PC-3 (cell line): ENCODE measurements at regions of chr1 and their contacts with region 1.

Region 1: DNA sequence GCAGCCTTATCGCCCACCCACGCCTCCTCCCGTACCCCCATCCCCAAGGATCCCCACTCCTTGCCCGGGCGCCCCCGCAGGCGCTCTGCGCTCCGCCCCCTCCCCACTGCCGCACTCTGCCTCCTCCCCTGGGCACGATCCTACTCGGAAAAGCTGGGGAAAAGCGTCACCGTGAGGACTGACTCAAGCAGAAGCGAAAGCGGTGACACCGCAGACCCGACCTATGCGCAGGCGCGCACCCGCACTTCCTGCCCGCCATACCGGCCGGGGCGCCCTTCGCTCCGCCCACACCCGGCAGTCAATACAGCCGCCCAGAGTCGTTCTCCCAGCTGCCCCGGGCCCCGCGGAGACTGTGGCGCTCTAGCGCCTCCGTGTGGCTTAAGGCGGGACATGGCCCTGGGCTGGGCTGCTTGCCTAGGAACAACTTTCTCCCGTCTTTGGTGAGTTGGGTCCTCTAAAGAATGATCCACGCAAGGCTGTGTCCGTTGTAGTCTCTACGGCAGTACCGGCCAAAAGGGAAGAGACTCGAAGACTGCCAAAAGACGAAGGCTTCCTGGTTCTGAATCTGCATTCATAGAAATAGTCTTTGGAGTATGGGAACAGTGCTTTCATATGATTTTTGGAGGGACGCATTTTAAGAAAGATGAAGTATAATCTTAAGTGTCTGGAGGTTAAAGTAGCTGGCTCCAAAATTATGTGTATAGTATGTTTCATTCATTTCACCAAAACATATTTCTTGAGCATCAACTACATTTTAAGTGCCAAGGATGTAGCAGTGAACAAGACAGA is at the start of gene OMA1:
- DNase-seq: peak; percentile 96
- ATAC-seq: peak; percentile 92
- H3K4me3 ChIP-seq: peak within 1 kb of the TSS; percentile 82
- H3K27ac ChIP-seq: peak within 1 kb of the TSS; percentile 66
- H3K4me1 ChIP-seq: peaks cover 11% of the 10 kb centered on the region
- H3K27me3 ChIP-seq: no peaks in the 10 kb centered on the region
- CTCF ChIP-seq: peak; percentile 90
- total RNA-seq, gene OMA1: 9.2 and 16.1 TPM in 2 replicates

Region 2: DNA sequence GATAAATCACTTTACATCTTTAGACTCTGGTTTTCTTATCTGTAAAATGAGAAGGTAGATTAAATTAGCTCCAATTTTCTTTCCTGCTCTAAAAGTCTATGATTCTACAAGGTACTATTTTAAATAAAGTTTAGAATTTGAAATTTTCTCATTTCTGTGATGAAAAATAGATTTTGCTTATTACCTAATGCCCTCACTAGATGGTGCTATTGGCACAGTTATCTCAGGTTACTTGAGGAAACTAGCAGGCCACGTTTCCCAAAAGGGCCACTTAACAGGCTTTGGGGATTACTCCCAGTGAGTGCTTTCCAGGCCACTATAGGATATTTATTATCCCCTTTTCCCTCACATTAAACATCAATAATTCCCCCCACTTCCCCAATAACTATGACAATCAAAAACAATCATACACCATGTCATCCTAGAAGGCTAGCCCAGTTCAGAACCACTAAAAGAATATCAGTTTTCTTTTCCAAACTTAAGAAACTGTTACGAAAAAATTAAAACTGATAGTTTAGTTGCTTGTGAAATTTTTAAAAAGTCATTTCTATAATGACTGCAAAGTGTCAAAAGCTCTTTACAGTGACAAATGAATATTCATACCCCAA is 30.8 kb before region 1 on chr1:
- CTCF ChIA-PET with region 1: no interaction called
- POLR2A ChIA-PET with region 1: no interaction called
- intact Hi-C with region 1: loop called (anchors 1 kb)
- DNase-seq: peak; percentile 81
- ATAC-seq: peak; percentile 63; the same call in 1 of the 2 replicates
- H3K4me3 ChIP-seq: no peak overlapping the region
- H3K27ac ChIP-seq: no peak overlapping the region
- H3K4me1 ChIP-seq: no peaks in the 10 kb centered on the region
- H3K27me3 ChIP-seq: no peaks in the 10 kb centered on the region
- CTCF ChIP-seq: peak; percentile 82

Region 3: DNA sequence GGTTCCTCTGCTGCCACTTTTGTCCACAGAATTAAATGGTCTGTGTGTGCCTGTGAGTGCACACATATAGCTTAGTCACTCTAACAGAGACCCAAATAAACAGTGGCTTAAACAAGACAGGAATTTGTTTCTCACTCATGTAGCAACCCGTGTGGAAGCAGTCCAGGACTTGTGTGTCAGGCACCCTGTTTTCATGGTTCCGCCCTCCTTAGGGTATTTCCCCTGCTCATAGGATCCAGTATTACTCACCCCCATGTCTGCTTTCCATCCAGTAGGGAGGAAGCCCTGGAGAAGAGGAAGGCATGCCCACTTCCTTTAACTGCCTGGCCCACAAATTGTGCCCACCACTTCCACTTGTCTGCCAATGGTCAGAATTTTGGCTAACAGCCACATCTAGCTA is 71.6 kb after region 1 on chr1:
- CTCF ChIA-PET with region 1: no interaction called
- POLR2A ChIA-PET with region 1: no interaction called
- intact Hi-C with region 1: loop called (anchors 2 kb)
- DNase-seq: peak; percentile 91
- ATAC-seq: peak; percentile 94
- H3K4me3 ChIP-seq: no peak overlapping the region
- H3K27ac ChIP-seq: peak overlapping the region; percentile 60
- H3K4me1 ChIP-seq: peaks cover 34% of the 10 kb centered on the region
- H3K27me3 ChIP-seq: no peaks in the 10 kb centered on the region
- CTCF ChIP-seq: no peak

Region 4: GRCh38 chr1:58652651-58653184 is 106.0 kb after region 1 on chr1:
- CTCF ChIA-PET with region 1: interaction called, 3 read pairs
- POLR2A ChIA-PET with region 1: interaction called, 4 read pairs
- intact Hi-C with region 1: loop called (anchors 1 kb)
- DNase-seq: peak; percentile 84
- ATAC-seq: peak; percentile 84
- H3K4me3 ChIP-seq: no peak overlapping the region
- H3K27ac ChIP-seq: no peak overlapping the region
- H3K4me1 ChIP-seq: peaks cover 10% of the 10 kb centered on the region
- H3K27me3 ChIP-seq: no peaks in the 10 kb centered on the region
- CTCF ChIP-seq: peak; percentile 93